ENCODE measurements at regions of chr14 and their contacts with region 1.

Region 1: DNA sequence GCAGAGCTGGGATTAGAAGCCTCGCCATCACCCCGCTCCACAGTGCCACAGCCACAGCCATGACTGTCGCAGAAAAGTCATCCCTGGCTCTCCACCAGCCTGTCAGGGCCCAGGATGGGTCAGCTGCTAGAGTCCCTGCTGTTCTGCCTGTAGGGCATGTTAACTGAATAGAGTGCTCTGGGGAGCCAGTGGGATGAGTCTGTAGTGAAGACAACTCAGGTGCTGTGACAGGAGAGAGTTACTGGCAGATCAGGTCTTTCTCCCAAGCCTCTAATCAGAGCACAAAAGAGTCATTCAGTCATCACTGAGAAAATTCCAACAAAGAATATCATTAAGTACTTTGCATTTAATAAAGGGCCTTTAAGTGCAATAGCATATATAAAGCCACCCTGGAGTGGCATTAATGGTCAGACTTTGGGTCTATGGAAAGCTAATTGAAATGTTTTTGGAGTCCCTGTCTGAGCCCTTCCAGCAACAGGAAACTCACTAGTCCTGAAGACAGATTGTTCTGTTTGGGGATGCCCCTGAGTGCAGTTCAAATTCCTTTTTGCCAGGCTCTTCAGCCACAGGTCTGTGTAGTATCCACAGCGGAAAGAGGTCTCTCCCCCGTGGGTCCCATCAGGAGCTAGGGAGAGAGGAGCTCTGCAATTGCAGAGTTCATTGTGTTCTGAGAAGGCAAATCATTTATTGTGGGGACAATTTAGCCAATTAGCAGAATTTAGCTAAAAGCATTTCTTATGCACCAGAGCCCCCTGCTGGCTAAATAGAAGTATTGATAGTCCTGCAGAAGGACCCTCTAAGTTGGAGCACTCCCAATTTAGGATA is 45.2 kb upstream of the C14orf132 start:
- DNase-seq: peak; percentile 42
- ATAC-seq: no peak
- H3K4me3 Mint-ChIP-seq: no peak overlapping the region
- H3K27ac Mint-ChIP-seq: no peak overlapping the region
- H3K4me1 Mint-ChIP-seq: no peaks in the 10 kb centered on the region
- H3K27me3 Mint-ChIP-seq: peaks cover 30% of the 10 kb centered on the region

Region 2: GRCh38 chr14:95609387-95609990 is 384.5 kb before region 1 on chr14:
- CTCF ChIA-PET with region 1: interaction called, 3 read pairs
- POLR2A ChIA-PET with region 1: no interaction called
- intact Hi-C with region 1: loop called in 1 of 2 experiments (anchors 1 kb)
- DNase-seq: peak; percentile 35
- ATAC-seq: no peak
- H3K4me3 Mint-ChIP-seq: no peak overlapping the region
- H3K27ac Mint-ChIP-seq: no peak overlapping the region
- H3K4me1 Mint-ChIP-seq: no peaks in the 10 kb centered on the region
- H3K27me3 Mint-ChIP-seq: peaks cover 40% of the 10 kb centered on the region

Region 3: DNA sequence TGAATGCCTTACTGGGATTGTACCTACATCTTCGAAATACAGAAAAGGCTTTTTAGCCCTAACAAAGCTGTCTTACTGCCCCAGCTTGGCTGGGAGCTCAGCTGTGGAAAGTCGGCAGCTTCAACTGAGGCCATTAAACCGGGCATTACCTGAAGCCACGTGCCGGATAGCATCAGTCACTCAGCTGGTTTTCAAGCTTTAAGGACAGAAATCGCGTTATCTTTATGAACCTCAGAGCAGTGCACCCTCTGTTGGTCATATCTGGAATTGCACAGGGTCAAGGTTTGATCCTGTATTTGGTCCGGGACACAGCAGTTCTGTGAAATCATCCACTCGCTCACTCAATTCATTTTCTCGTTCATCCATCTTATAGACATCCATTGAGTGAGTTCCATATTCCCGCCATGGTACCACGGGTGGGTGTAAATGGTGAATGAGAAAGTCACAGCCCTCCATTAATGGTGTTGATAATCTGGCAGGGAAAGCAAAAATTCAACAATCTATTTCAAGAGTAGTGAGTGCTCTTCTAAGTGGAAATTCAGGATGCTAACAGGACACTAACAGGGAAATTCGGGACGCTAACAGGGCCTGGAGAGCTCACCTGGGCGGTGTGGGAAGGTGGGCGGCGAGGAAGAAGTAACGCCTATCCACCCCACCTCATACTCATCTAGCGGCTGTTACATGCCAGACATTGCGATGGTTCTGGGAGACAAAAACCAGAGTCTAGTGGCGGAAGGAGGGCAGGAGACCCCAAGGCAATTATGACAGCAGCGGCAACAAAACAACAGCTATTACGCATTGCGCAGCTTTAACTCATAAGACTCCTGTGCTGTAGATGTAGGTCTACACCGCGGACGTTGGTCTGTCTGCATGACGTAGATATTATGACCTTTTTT is 219.5 kb before region 1 on chr14:
- CTCF ChIA-PET with region 1: interaction called, 6 read pairs
- POLR2A ChIA-PET with region 1: no interaction called
- intact Hi-C with region 1: loop called in 1 of 2 experiments (anchors 5 kb)
- DNase-seq: peak; percentile 73
- ATAC-seq: no peak
- H3K4me3 Mint-ChIP-seq: no peak overlapping the region
- H3K27ac Mint-ChIP-seq: no peak overlapping the region
- H3K4me1 Mint-ChIP-seq: peaks cover 2% of the 10 kb centered on the region
- H3K27me3 Mint-ChIP-seq: peaks cover 4% of the 10 kb centered on the region

Region 4: GRCh38 chr14:95895720-95896119 is 98.3 kb before region 1 on chr14:
- CTCF ChIA-PET with region 1: interaction called, 5 read pairs
- POLR2A ChIA-PET with region 1: no interaction called
- intact Hi-C with region 1: loop called (anchors 1 kb)
- DNase-seq: peak; percentile 53
- ATAC-seq: no peak
- H3K4me3 Mint-ChIP-seq: no peak overlapping the region
- H3K27ac Mint-ChIP-seq: no peak overlapping the region
- H3K4me1 Mint-ChIP-seq: no peaks in the 10 kb centered on the region
- H3K27me3 Mint-ChIP-seq: peaks cover 13% of the 10 kb centered on the region

Region 5: DNA sequence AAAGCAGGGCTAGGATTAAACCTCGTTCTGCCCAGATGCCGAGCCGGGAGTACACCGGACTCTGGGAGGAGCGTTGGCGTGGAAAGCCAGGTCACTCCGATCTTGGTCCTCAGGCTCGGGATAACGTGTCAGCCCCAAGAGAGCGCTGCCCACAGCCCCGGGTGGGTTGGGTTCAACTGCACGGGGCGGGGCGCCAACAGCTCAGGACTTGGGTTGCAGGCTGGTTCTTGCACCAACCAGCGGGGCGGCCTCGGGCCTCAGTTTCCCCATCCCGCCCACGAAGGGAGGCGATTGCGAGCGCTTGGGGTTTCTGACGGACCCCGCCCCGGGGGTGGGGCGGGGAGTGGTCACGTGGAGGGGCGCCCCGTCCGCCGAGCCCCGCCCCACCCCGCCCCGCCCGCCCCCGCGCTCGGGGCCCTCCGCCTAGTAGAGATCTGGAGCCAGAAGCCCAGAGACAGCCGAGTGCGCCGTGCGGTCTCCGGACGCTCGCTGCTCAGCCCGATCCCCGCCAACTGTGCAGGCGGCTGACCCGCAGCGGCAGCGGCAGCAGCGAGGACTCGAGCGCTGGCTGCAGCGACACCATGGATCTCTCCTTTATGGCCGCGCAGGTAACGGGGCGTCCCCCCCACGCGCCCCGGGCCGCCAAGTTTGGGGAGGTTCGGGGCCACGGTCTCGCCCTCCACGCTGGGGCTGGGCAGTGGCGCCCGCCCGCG is 45.1 kb after region 1 on chr14 and contains the start of gene C14orf132:
- CTCF ChIA-PET with region 1: no interaction called
- POLR2A ChIA-PET with region 1: no interaction called
- intact Hi-C with region 1: no loop called
- DNase-seq: peak; percentile 86
- ATAC-seq: peak; percentile 90
- H3K4me3 Mint-ChIP-seq: peak within 1 kb of the TSS; percentile 76
- H3K27ac Mint-ChIP-seq: peak within 1 kb of the TSS; percentile 63
- H3K4me1 Mint-ChIP-seq: peaks cover 15% of the 10 kb centered on the region
- H3K27me3 Mint-ChIP-seq: peaks cover 20% of the 10 kb centered on the region
- total RNA-seq, gene C14orf132: 4.1 to 4.3 TPM

Region 6: GRCh38 chr14:96100161-96101029 is 106.4 kb after region 1 on chr14:
- CTCF ChIA-PET with region 1: interaction called, 3 read pairs
- POLR2A ChIA-PET with region 1: no interaction called
- intact Hi-C with region 1: loop called in 1 of 2 experiments (anchors 5 kb)
- DNase-seq: peak; percentile 84
- ATAC-seq: peak; percentile 66
- H3K4me3 Mint-ChIP-seq: no peak overlapping the region
- H3K27ac Mint-ChIP-seq: no peak overlapping the region
- H3K4me1 Mint-ChIP-seq: no peaks in the 10 kb centered on the region
- H3K27me3 Mint-ChIP-seq: no peaks in the 10 kb centered on the region

Region 7: GRCh38 chr14:96275177-96276112 is 281.5 kb after region 1 on chr14:
- CTCF ChIA-PET with region 1: interaction called, 3 read pairs
- POLR2A ChIA-PET with region 1: no interaction called
- intact Hi-C with region 1: loop called in 1 of 2 experiments (anchors 2 kb)
- DNase-seq: peak; percentile 86
- ATAC-seq: peak; percentile 47
- H3K4me3 Mint-ChIP-seq: no peak overlapping the region
- H3K27ac Mint-ChIP-seq: no peak overlapping the region
- H3K4me1 Mint-ChIP-seq: no peaks in the 10 kb centered on the region
- H3K27me3 Mint-ChIP-seq: no peaks in the 10 kb centered on the region

Measured in activated CD4-positive, alpha-beta T cell treated with anti-CD3 and anti-CD28 coated beads for 36 hours (primary cell).